Naive thymus-derived CD4-positive, alpha-beta T cell (primary cell): ENCODE measurements at regions of chr5 and their contacts with region 1.

Region 1: GRCh38 chr5:134527146-134527960 is 1.9 kb downstream of the JADE2 start:
- DNase-seq: peak; percentile 34 to 82 (median 60)
- ATAC-seq: peak; percentile 45
- H3K4me3 ChIP-seq: peak overlapping the region; percentile 100
- H3K4me3 Mint-ChIP-seq: peak overlapping the region; percentile 91 to 100 (median 98)
- H3K27ac ChIP-seq: peak overlapping the region; percentile 97
- H3K27ac Mint-ChIP-seq: peak overlapping the region; percentile 48 to 99 (median 93)
- H3K4me1 ChIP-seq: peaks cover 43 to 50% of the 10 kb centered on the region in 2 donors
- H3K4me1 Mint-ChIP-seq: peaks cover 37 to 57% (median 52%) of the 10 kb centered on the region in 7 donors
- H3K27me3 ChIP-seq: no peaks in the 10 kb centered on the region
- H3K27me3 Mint-ChIP-seq: no peaks in the 10 kb centered on the region

Region 2: DNA sequence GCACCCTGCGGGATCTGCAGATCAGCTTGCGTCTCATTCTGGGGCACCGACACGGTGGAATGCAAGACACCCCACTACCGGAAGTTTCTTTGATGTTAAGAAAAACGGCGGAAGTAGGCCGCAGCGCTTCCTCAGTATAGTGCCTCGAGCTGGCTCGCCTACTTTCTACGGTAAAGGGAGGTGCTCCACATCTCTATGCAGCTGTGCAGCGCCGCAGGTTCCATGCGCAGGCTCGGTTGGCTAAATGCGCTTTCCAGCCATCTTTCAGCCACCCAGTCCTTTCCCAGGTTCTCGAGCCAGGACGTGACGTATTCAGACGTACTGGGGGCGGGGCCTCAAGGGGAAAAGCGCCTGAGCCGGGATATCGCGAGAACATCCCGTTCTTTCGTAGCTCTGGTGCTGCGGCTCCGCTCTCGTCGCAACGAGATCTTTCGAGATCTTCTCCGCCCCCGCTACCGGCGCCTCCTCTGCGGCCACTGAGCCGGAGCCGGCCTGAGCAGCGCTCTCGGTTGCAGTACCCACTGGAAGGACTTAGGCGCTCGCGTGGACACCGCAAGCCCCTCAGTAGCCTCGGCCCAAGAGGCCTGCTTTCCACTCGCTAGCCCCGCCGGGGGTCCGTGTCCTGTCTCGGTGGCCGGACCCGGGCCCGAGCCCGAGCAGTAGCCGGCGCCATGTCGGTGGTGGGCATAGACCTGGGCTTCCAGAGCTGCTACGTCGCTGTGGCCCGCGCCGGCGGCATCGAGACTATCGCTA is 1475.6 kb before region 1 on chr5 and contains the start of gene HSPA4:
- CTCF ChIA-PET with region 1: no interaction called
- POLR2A ChIA-PET with region 1: no interaction called
- intact Hi-C with region 1: loop called in 1 of 2 experiments (anchors 10 kb)
- DNase-seq: peak; percentile 86 to 99 (median 98)
- ATAC-seq: peak; percentile 91
- H3K4me3 ChIP-seq: peak within 1 kb of the TSS; percentile 92
- H3K4me3 Mint-ChIP-seq: peak within 1 kb of the TSS; percentile 91 to 99 (median 98)
- H3K27ac ChIP-seq: peak within 1 kb of the TSS; percentile 98
- H3K27ac Mint-ChIP-seq: peak within 1 kb of the TSS; percentile 99 to 100 (median 100)
- H3K4me1 ChIP-seq: peaks cover 17 to 19% of the 10 kb centered on the region in 2 donors
- H3K4me1 Mint-ChIP-seq: peaks cover 31 to 70% (median 52%) of the 10 kb centered on the region in 7 donors
- H3K27me3 ChIP-seq: no peaks in the 10 kb centered on the region
- H3K27me3 Mint-ChIP-seq: no peaks in the 10 kb centered on the region
- total RNA-seq, gene HSPA4: 42.1 to 103 (median 50.0) TPM

Region 3: GRCh38 chr5:134370871-134371833 is 156.2 kb before region 1 on chr5 and contains the start of gene UBE2B:
- CTCF ChIA-PET with region 1: interaction called, 6 read pairs
- POLR2A ChIA-PET with region 1: interaction called, 92 read pairs
- intact Hi-C with region 1: loop called (anchors 1 kb)
- DNase-seq: peak; percentile 96 to 99 (median 98)
- ATAC-seq: peak; percentile 86
- H3K4me3 ChIP-seq: peak within 1 kb of the TSS; percentile 94
- H3K4me3 Mint-ChIP-seq: peak within 1 kb of the TSS; percentile 82 to 99 (median 96)
- H3K27ac ChIP-seq: peak within 1 kb of the TSS; percentile 100
- H3K27ac Mint-ChIP-seq: peak within 1 kb of the TSS; percentile 97 to 100 (median 100)
- H3K4me1 ChIP-seq: peaks cover 25 to 38% of the 10 kb centered on the region in 2 donors
- H3K4me1 Mint-ChIP-seq: peaks cover 30 to 76% (median 60%) of the 10 kb centered on the region in 7 donors
- H3K27me3 ChIP-seq: no peaks in the 10 kb centered on the region
- H3K27me3 Mint-ChIP-seq: peaks cover 0 to 8% (median 0%) of the 10 kb centered on the region in 5 donors
- total RNA-seq, gene UBE2B: 91.4 to 141 (median 124) TPM

Region 4: GRCh38 chr5:134465816-134466240 is 61.5 kb before region 1 on chr5:
- CTCF ChIA-PET with region 1: interaction called, 3 read pairs
- POLR2A ChIA-PET with region 1: interaction called, 60 read pairs
- intact Hi-C with region 1: loop called (anchors 1 kb)
- DNase-seq: peak in 6 of 9 donors; percentile 16 to 73 (median 20)
- ATAC-seq: peak; percentile 71
- H3K4me3 ChIP-seq: peak overlapping the region; percentile 71
- H3K4me3 Mint-ChIP-seq: peak overlapping the region; percentile 75 to 93 (median 86)
- H3K27ac ChIP-seq: peak overlapping the region; percentile 66
- H3K27ac Mint-ChIP-seq: peak overlapping the region in 8 of 9 donors; percentile 66 to 93 (median 86)
- H3K4me1 ChIP-seq: peaks cover 8 to 16% of the 10 kb centered on the region in 2 donors
- H3K4me1 Mint-ChIP-seq: peaks cover 7 to 25% (median 18%) of the 10 kb centered on the region in 7 donors
- H3K27me3 ChIP-seq: no peaks in the 10 kb centered on the region
- H3K27me3 Mint-ChIP-seq: no peaks in the 10 kb centered on the region

Region 5: DNA sequence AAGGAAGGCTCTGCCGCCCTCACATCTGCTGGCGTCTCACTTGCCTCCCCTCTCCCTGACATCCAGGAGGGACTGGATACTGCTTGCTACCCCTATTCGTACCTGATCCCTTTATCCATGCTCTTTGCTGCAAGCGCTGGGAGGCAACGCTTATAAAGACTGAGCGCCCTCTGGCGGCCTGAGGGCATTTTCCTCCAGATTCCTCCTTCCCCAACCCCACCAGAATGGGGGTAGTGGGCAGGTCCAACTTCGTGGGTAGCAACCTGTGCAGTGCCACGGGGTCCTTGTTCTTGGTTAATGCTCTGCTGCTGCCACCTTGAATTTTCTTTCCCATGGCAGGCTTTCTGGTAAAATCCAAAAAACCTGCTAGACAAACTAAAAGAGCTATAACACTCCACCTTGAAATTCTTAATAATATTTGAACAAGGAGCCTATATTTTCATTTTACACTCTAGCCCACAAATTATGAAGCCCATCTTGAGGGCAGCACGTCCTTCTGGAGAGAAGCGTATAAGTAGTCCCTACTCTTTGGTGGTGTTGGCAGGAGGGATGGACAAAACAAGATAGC is 50.5 kb after region 1 on chr5:
- CTCF ChIA-PET with region 1: interaction called, 4 read pairs
- POLR2A ChIA-PET with region 1: interaction called, 4 read pairs
- intact Hi-C with region 1: loop called (anchors 1 kb)
- DNase-seq: peak; percentile 56 to 77 (median 69)
- ATAC-seq: peak; percentile 80
- H3K4me3 ChIP-seq: no peak overlapping the region
- H3K4me3 Mint-ChIP-seq: no peak overlapping the region
- H3K27ac ChIP-seq: peak overlapping the region; percentile 44
- H3K27ac Mint-ChIP-seq: peak overlapping the region in 8 of 9 donors; percentile 2 to 78 (median 63)
- H3K4me1 ChIP-seq: no peaks in the 10 kb centered on the region
- H3K4me1 Mint-ChIP-seq: peaks cover 0 to 25% (median 13%) of the 10 kb centered on the region in 7 donors
- H3K27me3 ChIP-seq: no peaks in the 10 kb centered on the region
- H3K27me3 Mint-ChIP-seq: no peaks in the 10 kb centered on the region

Region 6: GRCh38 chr5:134758504-134759341 is 231.4 kb after region 1 on chr5 and contains the start of gene DDX46:
- CTCF ChIA-PET with region 1: no interaction called
- POLR2A ChIA-PET with region 1: no interaction called
- intact Hi-C with region 1: loop called in 1 of 2 experiments (anchors 2 kb)
- DNase-seq: peak; percentile 85 to 95 (median 91)
- ATAC-seq: peak; percentile 99
- H3K4me3 ChIP-seq: peak within 1 kb of the TSS; percentile 75
- H3K4me3 Mint-ChIP-seq: peak within 1 kb of the TSS; percentile 92 to 100 (median 99)
- H3K27ac ChIP-seq: peak within 1 kb of the TSS; percentile 87
- H3K27ac Mint-ChIP-seq: peak within 1 kb of the TSS; percentile 93 to 99 (median 97)
- H3K4me1 ChIP-seq: peaks cover 12 to 13% of the 10 kb centered on the region in 2 donors
- H3K4me1 Mint-ChIP-seq: peaks cover 20 to 47% (median 38%) of the 10 kb centered on the region in 7 donors
- H3K27me3 ChIP-seq: no peaks in the 10 kb centered on the region
- H3K27me3 Mint-ChIP-seq: no peaks in the 10 kb centered on the region
- total RNA-seq, gene DDX46: 51.2 to 72.5 (median 64.2) TPM